Dendritic cell treated with granulocyte-macrophage colony-stimulating factor and Interleukin-4, amounts not matched to agents 40 ng/mL and 50 ng/mL, for 4 days (primary cell): ENCODE measurements at regions of chr16 and their contacts with region 1.

Region 1: DNA sequence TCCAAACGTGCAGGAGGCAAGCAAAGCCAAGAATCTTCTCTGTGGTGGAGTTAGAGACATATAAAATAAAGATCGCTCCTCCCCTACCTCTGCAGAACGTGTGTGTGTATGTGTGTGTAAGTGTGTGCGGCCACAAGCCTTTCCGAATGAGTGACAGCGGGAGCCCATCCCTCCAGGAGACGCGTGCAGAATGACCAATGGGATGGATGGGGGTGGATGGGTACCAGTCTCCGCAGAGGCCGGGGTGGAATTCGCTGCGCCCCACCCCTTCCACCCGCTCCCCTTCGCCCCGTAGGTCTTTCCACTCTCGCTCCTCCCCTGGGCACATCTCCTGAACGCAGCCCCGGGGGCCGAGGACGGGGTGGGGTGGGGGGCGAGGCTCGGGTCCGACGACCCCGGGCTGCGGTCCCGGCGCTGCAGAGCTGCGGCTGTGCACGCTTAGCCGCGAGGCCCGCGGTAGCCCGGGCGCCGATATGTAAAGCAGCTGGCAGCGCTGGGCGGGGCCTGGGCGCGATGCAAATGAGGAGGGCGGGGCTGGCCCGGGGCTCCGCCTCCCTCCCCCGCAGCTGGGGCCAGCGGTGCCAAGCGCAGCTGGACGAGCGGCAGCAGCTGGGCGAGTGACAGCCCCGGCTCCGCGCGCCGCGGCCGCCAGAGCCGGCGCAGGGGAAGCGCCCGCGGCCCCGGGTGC is at the start of gene PRKCB:
- H3K4me3 Mint-ChIP-seq: peak within 1 kb of the TSS; percentile 82
- H3K27ac Mint-ChIP-seq: peak within 1 kb of the TSS; percentile 64
- H3K4me1 Mint-ChIP-seq: peaks cover 37% of the 10 kb centered on the region
- H3K27me3 Mint-ChIP-seq: peaks cover 25% of the 10 kb centered on the region

Region 2: GRCh38 chr16:23650674-23651416 is 184.7 kb before region 1 on chr16:
- intact Hi-C with region 1: no loop called
- H3K4me3 Mint-ChIP-seq: no peak overlapping the region
- H3K27ac Mint-ChIP-seq: no peak overlapping the region
- H3K4me1 Mint-ChIP-seq: peaks cover 10% of the 10 kb centered on the region
- H3K27me3 Mint-ChIP-seq: no peaks in the 10 kb centered on the region

Region 3: GRCh38 chr16:23852794-23853562 is 17.4 kb after region 1 on chr16:
- intact Hi-C with region 1: loop called (anchors 2 kb)
- H3K4me3 Mint-ChIP-seq: no peak overlapping the region
- H3K27ac Mint-ChIP-seq: peak overlapping the region; percentile 22
- H3K4me1 Mint-ChIP-seq: peaks cover 85% of the 10 kb centered on the region
- H3K27me3 Mint-ChIP-seq: no peaks in the 10 kb centered on the region

Region 4: DNA sequence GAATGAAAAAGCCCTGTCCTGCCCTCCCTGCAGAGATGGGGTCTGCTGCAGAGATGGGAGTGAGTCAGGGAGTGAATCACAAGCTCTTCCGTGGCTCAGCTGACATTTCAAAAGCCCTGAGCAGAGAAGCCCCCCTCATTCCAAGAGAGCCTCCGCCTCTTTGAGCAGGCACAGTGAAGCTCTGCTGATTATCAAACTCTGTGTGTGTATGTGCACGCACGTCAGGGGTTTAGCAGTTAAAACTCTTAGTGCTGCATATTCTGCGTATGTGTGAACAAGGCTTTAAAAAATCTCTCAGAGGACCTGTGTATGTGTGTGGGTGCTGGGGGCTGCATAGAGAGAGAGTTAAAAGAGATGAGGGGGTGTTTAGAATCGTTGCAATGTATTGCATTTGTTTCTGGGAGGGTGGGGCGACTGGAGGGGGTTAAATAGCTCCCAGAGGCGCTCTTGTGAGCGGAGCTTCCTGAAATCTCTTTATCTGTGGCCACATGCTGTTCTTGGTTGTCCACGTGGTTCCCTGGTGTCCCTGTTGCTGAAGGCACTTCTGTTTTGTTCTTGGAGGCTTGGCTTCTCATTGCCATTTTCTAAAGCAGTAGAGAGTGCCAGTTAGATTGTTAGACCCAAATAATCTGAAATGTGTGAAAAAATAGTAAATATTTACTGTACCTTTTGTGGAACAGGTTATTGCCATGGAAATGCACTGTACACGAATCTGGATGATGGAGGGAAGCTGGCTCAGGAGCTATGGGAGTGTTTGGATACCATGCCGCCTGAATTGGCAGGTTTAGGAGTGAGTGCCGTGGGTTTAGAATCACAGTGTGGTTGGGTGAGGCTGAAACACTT is 116.8 kb after region 1 on chr16:
- intact Hi-C with region 1: loop called (anchors 5 kb)
- H3K4me3 Mint-ChIP-seq: no peak overlapping the region
- H3K27ac Mint-ChIP-seq: peak overlapping the region; percentile 68
- H3K4me1 Mint-ChIP-seq: peaks cover 63% of the 10 kb centered on the region
- H3K27me3 Mint-ChIP-seq: no peaks in the 10 kb centered on the region